CD4-positive, alpha-beta T cell (primary cell): ENCODE measurements at regions of chr9 and their contacts with region 1.

Region 1: DNA sequence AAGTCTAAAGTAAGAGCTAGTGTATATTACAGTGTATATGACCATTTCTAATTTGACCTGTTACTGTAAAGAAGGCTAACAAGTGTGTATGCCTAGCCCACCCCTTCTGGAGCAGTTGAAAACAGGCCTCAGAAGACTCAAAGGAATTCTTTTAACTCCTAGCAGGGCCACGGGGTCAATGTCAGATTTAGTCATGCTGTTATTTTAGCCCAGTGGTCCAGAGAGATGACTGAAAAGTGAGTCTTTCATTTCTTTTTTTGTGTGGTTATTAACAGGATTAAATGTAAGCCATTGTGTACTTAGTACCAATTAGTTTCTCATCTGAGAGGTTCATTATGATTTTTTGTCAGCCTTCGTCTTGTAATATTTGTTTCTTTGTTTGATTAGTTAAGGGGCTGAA is 24.4 kb downstream of the ZCCHC7 start:
- DNase-seq: no peak
- ATAC-seq: no peak
- H3K4me3 ChIP-seq: no peak overlapping the region
- H3K4me3 Mint-ChIP-seq: peak overlapping the region; percentile 16
- H3K27ac ChIP-seq: peak overlapping the region in 1 of 2 donors; percentile 33
- H3K27ac Mint-ChIP-seq: peak overlapping the region; percentile 79
- H3K4me1 ChIP-seq: peaks cover 3% of the 10 kb centered on the region
- H3K4me1 Mint-ChIP-seq: peaks cover 79% of the 10 kb centered on the region
- H3K27me3 ChIP-seq: no peaks in the 10 kb centered on the region
- H3K27me3 Mint-ChIP-seq: no peaks in the 10 kb centered on the region
- CTCF ChIP-seq: no peak

Region 2: GRCh38 chr9:37036776-37037502 is 107.8 kb before region 1 on chr9:
- CTCF ChIA-PET with region 1: no interaction called
- POLR2A ChIA-PET with region 1: no interaction called
- intact Hi-C with region 1: loop called in 1 of 2 experiments (anchors 5 kb)
- DNase-seq: peak in 6 of 14 experiments; percentile 20 to 73 (median 54)
- ATAC-seq: peak; percentile 72
- H3K4me3 ChIP-seq: peak overlapping the region; percentile 60
- H3K4me3 Mint-ChIP-seq: peak overlapping the region; percentile 66
- H3K27ac ChIP-seq: no peak overlapping the region
- H3K27ac Mint-ChIP-seq: no peak overlapping the region
- H3K4me1 ChIP-seq: peaks cover 48% of the 10 kb centered on the region
- H3K4me1 Mint-ChIP-seq: peaks cover 38% of the 10 kb centered on the region
- H3K27me3 ChIP-seq: peaks cover 79 to 86% of the 10 kb centered on the region in 2 experiments
- H3K27me3 Mint-ChIP-seq: peaks cover 97% of the 10 kb centered on the region
- CTCF ChIP-seq: no peak

Region 3: DNA sequence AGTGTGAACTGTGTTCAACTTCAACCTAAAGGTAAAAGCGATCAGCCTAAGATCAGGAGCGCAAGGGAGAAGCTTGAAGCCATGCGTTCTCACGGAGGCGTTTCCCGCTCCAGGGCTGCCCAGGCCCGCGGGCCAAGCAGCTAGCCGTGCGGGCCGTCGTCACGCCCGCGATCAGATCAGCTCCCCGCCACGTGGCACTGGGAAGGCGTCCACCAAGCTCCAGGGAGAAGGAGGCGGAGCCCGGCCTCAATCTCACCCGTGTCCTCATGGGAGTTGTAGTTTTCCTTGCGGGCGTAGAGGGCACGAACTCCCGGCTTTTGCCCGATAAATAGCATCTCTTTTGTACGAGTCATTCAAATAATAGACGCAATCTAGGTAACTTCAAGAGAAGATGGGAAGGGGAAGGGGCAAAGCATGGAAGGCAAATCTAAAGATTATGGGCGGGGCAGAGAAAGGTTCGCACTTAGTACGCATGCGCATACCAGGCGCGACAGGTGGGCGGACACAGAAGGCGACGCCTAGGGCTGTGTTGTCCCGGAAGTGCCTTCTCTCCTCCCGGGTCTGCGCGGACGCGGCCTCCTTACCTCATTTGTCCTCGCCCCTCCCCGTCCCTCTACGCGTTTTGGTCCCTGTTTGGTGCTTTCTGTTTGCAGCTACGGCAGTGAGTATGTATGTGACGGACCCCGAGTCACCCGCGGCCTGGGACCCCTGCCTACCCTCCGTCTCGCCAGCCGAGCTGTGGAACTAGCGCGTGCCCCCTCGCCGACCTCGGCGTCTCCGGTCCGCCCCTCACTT is 65.2 kb before region 1 on chr9:
- CTCF ChIA-PET with region 1: no interaction called
- POLR2A ChIA-PET with region 1: interaction called, 22 read pairs
- intact Hi-C with region 1: no loop called
- DNase-seq: peak; percentile 85 to 98 (median 90)
- ATAC-seq: peak; percentile 96
- H3K4me3 ChIP-seq: peak overlapping the region; percentile 75
- H3K4me3 Mint-ChIP-seq: peak overlapping the region; percentile 97
- H3K27ac ChIP-seq: peak overlapping the region; percentile 67 to 93
- H3K27ac Mint-ChIP-seq: peak overlapping the region; percentile 93
- H3K4me1 ChIP-seq: peaks cover 19% of the 10 kb centered on the region
- H3K4me1 Mint-ChIP-seq: peaks cover 53% of the 10 kb centered on the region
- H3K27me3 ChIP-seq: no peaks in the 10 kb centered on the region
- H3K27me3 Mint-ChIP-seq: no peaks in the 10 kb centered on the region
- CTCF ChIP-seq: no peak

Region 4: DNA sequence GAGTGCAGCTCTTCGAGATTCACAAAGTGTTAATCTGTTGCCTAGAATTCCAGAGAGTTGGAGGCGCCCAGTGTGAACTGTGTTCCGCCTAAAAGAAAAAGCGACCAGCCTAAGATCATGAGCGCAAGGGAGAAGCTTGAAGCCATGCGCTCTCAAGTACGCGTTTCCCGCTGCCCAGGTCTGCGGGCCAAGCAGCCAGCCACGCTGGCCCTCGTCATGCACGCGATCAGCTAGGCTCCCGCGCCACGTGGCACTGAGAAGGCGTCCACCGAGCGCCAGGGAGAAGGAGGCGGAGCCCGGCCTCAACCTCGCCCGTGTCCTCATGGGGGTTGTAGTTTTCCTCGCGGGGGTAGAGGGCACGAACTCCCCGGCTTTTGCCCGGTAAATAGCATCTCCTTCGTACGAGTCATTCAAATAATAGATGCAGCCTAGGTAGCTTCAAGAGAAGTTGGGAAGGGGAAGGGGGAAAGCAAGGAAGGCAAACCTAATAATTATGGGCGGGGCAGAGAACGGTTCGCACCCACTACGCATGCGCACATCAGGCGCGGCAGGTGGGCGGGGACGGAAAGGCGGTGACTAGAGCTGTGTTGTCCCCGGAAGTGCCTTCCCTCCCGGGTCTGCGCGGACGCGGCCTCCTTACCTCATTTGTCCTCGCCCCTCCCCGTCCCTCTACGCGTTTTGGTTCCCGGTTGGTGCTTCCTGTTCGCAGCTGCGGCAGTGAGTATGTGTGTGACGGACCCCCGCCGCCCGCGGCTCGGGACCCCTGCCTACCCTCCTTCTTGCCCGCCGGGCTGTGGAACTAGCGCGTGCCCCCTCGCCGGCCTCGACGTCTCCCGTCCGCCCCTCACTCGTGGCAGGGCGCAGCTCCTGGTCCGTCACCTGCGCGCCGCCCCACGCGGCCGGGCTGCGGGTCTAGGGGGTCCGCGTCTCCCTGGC is 24.6 kb before region 1 on chr9 and contains the start of gene ZCCHC7:
- CTCF ChIA-PET with region 1: interaction called, 3 read pairs
- POLR2A ChIA-PET with region 1: interaction called, 78 read pairs
- intact Hi-C with region 1: loop called in 1 of 2 experiments (anchors 1 kb)
- DNase-seq: peak; percentile 95 to 98 (median 97)
- ATAC-seq: peak; percentile 95
- H3K4me3 ChIP-seq: peak within 1 kb of the TSS; percentile 79
- H3K4me3 Mint-ChIP-seq: peak within 1 kb of the TSS; percentile 95
- H3K27ac ChIP-seq: peak within 1 kb of the TSS; percentile 87 to 94
- H3K27ac Mint-ChIP-seq: peak within 1 kb of the TSS; percentile 92
- H3K4me1 ChIP-seq: peaks cover 21% of the 10 kb centered on the region
- H3K4me1 Mint-ChIP-seq: peaks cover 42% of the 10 kb centered on the region
- H3K27me3 ChIP-seq: no peaks in the 10 kb centered on the region
- H3K27me3 Mint-ChIP-seq: no peaks in the 10 kb centered on the region
- CTCF ChIP-seq: no peak
- total RNA-seq, gene ZCCHC7: 40.7 to 41.0 TPM

Region 5: DNA sequence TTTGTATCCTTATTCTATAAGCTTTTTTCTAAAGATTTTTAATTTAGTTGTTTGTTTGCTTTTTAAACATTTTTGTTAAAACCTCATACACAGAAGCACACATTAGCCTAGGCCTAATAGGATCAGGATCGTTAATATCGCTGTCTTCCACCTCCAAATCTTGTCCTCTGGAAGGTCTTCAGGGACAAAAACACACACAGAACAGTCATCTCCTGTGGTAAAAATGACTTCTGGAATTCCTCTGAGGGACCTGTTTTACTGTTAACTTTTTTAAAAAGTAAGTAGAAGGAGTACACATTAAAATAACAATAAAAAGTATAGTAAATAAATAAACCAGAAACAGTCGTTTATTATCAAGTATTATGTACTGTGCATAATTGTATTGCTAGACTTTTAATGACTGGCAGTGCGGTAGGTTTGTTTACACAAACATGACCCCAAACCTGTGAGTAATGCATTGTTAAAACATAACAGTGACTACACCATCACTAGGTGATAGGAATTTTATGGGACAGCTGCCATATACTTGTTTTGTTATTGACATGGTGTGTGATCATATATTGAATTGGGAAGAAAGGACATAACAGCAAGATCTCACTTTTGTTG is 85.2 kb after region 1 on chr9:
- CTCF ChIA-PET with region 1: no interaction called
- POLR2A ChIA-PET with region 1: no interaction called
- intact Hi-C with region 1: no loop called
- DNase-seq: no peak
- ATAC-seq: no peak
- H3K4me3 ChIP-seq: no peak overlapping the region
- H3K4me3 Mint-ChIP-seq: no peak overlapping the region
- H3K27ac ChIP-seq: no peak overlapping the region
- H3K27ac Mint-ChIP-seq: no peak overlapping the region
- H3K4me1 ChIP-seq: no peaks in the 10 kb centered on the region
- H3K4me1 Mint-ChIP-seq: peaks cover 35% of the 10 kb centered on the region
- H3K27me3 ChIP-seq: no peaks in the 10 kb centered on the region
- H3K27me3 Mint-ChIP-seq: no peaks in the 10 kb centered on the region
- CTCF ChIP-seq: no peak

Region 6: DNA sequence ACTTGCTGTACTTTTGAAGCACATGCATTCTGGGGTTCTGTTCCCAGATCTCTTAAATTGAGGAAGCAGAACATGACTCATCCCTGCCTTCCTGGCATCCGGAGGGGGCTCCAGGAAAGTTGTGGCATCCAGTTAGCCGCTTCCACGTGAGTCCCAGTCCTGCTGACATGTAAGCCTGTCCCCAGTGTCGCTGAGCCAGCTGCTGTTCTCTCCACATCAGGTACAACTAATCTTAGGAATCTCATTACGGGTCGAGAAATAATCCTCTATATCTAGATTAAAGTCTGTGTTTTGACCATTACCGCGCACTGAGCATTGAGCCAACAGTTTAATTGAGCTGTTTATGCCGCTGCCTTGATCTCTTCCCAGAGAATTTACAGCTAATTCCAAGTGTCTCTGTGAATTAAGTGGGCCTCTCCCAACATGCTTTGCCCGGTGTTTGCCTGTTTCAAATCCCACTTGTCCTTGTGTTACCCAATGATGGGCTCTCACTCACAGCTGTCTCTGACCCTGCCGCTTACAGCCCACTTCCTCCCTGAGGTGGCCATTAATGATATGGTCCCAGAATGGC is 934.8 kb after region 1 on chr9:
- CTCF ChIA-PET with region 1: no interaction called
- POLR2A ChIA-PET with region 1: no interaction called
- intact Hi-C with region 1: no loop called
- DNase-seq: peak in 2 of 14 experiments; percentile 23 to 33
- ATAC-seq: no peak
- H3K4me3 ChIP-seq: no peak overlapping the region
- H3K4me3 Mint-ChIP-seq: no peak overlapping the region
- H3K27ac ChIP-seq: no peak overlapping the region
- H3K27ac Mint-ChIP-seq: no peak overlapping the region
- H3K4me1 ChIP-seq: no peaks in the 10 kb centered on the region
- H3K4me1 Mint-ChIP-seq: peaks cover 6% of the 10 kb centered on the region
- H3K27me3 ChIP-seq: peaks cover 14% of the 10 kb centered on the region in 2 experiments
- H3K27me3 Mint-ChIP-seq: peaks cover 47% of the 10 kb centered on the region
- CTCF ChIP-seq: no peak